ENCODE measurements at regions of chr14 and their contacts with region 1.

Region 1: GRCh38 chr14:89416002-89416995 is 734 bp downstream of the FOXN3 start:
- DNase-seq: peak; percentile 99
- ATAC-seq: peak; percentile 93
- H3K4me3 ChIP-seq: peak overlapping the region; percentile 99 to 100
- H3K27ac ChIP-seq: peak overlapping the region; percentile 94 to 100
- H3K4me1 ChIP-seq: peaks cover 0 to 2% of the 10 kb centered on the region in 2 donors
- H3K27me3 ChIP-seq: no peaks in the 10 kb centered on the region

Region 2: GRCh38 chr14:89033756-89034155 is 382.5 kb before region 1 on chr14:
- intact Hi-C with region 1: loop called in 1 of 2 experiments (anchors 10 kb)
- DNase-seq: no peak
- ATAC-seq: no peak
- H3K4me3 ChIP-seq: no peak overlapping the region
- H3K27ac ChIP-seq: no peak overlapping the region
- H3K4me1 ChIP-seq: no peaks in the 10 kb centered on the region
- H3K27me3 ChIP-seq: no peaks in the 10 kb centered on the region

Region 3: DNA sequence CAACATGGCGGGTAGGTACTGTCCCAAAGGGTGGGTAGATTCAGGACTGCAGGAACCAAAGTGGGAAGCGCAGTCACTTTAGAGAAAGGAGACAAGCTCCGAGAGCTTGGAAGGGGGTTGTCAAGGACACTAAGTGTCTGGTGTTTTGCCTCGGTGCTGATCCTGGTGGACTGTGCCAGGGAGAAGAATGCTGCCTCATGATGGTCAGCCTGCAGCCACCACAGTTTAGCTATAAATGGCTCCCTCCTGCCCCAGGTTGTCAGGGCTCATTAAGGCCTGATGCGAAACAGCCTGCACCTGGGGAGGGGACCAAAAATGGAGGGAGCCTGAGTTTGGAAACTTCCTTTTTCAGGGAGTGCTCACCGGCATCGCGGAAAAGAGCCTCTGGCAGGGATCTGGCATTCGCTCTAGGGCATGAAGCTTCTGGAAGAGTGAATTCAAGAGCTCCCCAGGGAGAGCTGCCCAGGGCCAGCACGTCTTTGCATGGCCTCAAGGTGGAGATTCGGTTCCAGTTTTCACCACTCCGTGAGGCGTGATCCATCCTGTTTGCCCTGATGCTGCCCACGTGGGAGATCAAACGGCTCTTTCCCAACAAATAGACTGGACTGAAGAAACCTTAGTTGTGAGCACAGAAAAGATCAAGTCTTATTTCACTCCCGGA is 163.3 kb before region 1 on chr14:
- intact Hi-C with region 1: loop called in 1 of 2 experiments (anchors 5 kb)
- DNase-seq: peak; percentile 62 to 77
- ATAC-seq: peak; percentile 52
- H3K4me3 ChIP-seq: no peak overlapping the region
- H3K27ac ChIP-seq: no peak overlapping the region
- H3K4me1 ChIP-seq: peaks cover under 1 to 16% of the 10 kb centered on the region in 2 donors
- H3K27me3 ChIP-seq: no peaks in the 10 kb centered on the region

Region 4: DNA sequence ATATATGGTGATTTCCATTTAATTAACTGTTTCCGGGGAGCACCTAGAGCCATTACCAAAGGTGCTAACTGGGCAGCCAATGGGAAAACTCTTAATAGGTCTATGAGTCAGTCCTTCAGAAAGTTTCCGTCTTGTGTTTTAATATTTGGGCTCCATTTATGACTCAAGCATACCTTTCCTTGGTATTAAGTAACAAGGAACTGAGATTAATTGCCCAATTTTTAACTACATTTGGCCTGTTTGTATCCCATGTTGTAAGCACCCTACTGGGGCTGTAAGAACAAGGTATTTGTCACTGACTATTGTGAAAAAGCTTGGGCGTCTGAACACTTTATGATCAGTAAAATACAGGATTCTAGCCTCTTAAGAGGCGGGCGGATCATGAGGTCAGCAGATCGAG is 63.5 kb after region 1 on chr14:
- intact Hi-C with region 1: loop called in 1 of 2 experiments (anchors 5 kb)
- DNase-seq: no peak
- ATAC-seq: no peak
- H3K4me3 ChIP-seq: no peak overlapping the region
- H3K27ac ChIP-seq: no peak overlapping the region
- H3K4me1 ChIP-seq: peaks cover 0 to 7% of the 10 kb centered on the region in 2 donors
- H3K27me3 ChIP-seq: no peaks in the 10 kb centered on the region

Region 5: DNA sequence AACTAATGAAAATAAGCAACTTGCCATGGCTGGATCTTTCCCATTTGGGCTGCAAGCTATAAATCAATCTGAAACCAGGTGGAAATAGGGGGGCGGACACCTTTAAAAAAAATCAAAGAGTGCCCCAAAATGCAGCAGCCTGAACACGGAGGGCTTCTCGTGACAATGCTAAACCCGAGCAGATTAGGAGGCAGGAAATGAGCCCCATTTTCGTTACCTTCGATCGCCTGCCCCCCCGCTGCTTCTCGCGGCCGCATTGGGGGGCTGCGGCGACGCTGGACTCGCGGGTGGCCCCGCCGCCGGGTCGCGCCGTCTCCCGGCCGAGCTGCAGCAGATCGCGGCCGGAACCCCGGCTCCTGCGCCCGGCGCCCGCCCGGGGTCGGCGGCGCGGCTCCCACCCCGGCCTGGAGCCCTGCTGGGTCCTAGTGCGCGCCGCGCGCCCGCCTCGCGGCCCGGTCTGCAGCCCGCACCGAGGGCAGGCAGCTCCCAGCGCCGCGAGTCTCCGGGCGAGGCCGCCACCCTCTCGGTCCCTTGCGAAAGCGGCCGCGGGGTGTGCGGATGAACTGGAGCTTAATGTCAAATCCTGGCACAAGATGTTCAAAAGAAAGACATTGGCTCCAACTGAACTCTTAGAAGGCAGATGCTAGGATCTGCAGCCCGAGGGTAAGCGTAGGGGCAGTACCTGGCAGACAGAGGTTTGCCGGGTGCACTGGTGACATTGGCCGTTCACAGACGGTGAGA is 202.7 kb after region 1 on chr14:
- intact Hi-C with region 1: loop called in 1 of 2 experiments (anchors 5 kb)
- DNase-seq: peak; percentile 85 to 91
- ATAC-seq: peak; percentile 85
- H3K4me3 ChIP-seq: peak overlapping the region; percentile 86 to 90
- H3K27ac ChIP-seq: peak overlapping the region in 1 of 2 donors; percentile 37
- H3K4me1 ChIP-seq: peaks cover 0 to 8% of the 10 kb centered on the region in 2 donors
- H3K27me3 ChIP-seq: no peaks in the 10 kb centered on the region

Region 6: GRCh38 chr14:89813617-89814031 is 397.3 kb after region 1 on chr14:
- intact Hi-C with region 1: loop called in 1 of 2 experiments (anchors 5 kb)
- DNase-seq: peak; percentile 66 to 84
- ATAC-seq: peak; percentile 80
- H3K4me3 ChIP-seq: no peak overlapping the region
- H3K27ac ChIP-seq: peak overlapping the region; percentile 41 to 71
- H3K4me1 ChIP-seq: peaks cover 0 to 3% of the 10 kb centered on the region in 2 donors
- H3K27me3 ChIP-seq: no peaks in the 10 kb centered on the region

Region 7: DNA sequence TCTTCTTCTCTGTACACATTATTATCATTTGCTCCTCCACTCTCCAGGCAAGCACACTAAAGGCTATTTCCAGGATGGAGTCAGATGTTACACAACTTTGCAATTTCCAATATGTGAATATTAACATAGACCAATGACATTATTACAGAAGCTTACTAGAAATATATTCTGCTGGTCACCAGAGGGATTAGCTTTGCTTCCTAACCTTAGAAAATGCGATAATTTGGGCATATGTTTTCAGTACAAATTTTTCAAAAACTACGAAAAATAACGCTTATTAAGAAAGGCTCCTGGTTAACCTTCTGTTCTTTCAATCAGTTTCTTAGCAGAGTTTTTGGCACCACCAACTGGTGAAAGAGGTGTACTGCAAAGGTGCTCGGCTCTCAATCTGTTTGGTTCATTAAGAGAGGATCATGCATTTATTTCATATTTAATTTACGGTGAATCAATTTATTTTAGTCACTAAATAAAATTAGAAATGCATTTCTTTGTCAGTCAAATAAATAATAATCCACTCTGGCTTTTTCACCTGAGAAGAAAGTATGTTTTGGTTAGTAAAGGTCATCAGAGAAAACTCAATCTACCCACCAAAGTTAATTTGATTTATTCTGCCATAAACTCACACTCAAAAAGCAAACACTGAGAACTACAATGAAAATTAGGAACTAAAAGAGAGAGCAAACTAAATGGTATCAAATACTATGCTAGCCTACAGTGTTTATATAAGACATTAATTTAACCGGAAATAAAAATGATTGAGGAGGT is 499.0 kb after region 1 on chr14:
- intact Hi-C with region 1: loop called in 1 of 2 experiments (anchors 5 kb)
- DNase-seq: peak in 1 of 2 donors; percentile 54
- ATAC-seq: peak; percentile 79
- H3K4me3 ChIP-seq: no peak overlapping the region
- H3K27ac ChIP-seq: no peak overlapping the region
- H3K4me1 ChIP-seq: no peaks in the 10 kb centered on the region
- H3K27me3 ChIP-seq: no peaks in the 10 kb centered on the region

Measured in aorta (tissue), 5 donors.